Activated T-helper 1 cell treated with anti-CD3 and anti-CD28 coated beads, Interleukin-12 subunit alpha, Interleukin-12 subunit beta, Interleukin-2, Interleukin-4 antibody, amounts not matched to agents 30 ng/mL and 10 ng/mL and 1 ng/mL, durations not matched to agents 14 hours and 24 hours and 36 hours (primary cell): ENCODE measurements at regions of chrX and their contacts with region 1.

Region 1: DNA sequence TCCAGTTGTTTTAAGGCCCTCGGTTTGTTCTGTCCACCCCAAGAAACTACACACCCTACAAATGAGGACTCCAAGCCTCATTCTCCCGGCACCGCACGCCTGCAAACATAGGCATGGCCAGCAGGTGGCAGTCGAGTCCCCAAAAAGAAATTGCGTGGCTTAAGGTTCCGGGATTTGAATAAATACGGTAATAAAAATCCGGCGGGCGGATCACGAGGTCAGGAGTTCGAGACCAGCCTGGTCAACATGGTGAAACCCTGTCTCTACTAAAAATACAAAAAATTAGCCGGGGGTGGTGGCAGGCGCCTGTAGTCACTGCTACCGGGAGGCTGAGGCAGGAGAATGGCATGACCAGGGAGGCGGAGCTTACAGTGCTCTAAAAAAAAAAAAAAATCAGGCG is 21.8 kb upstream of the CSF2RA start:
- DNase-seq: peak; percentile 77
- H3K4me3 Mint-ChIP-seq: peak overlapping the region; percentile 64
- H3K27ac Mint-ChIP-seq: peak overlapping the region; percentile 78
- H3K4me1 Mint-ChIP-seq: peaks cover 42% of the 10 kb centered on the region
- H3K27me3 Mint-ChIP-seq: peaks cover 4% of the 10 kb centered on the region

Region 2: GRCh38 chrX:1205680-1206611 is 40.9 kb before region 1 on chrX:
- intact Hi-C with region 1: loop called (anchors 1 kb)
- DNase-seq: peak; percentile 32
- H3K4me3 Mint-ChIP-seq: peak overlapping the region; percentile 57
- H3K27ac Mint-ChIP-seq: no peak overlapping the region
- H3K4me1 Mint-ChIP-seq: peaks cover 31% of the 10 kb centered on the region
- H3K27me3 Mint-ChIP-seq: peaks cover 1% of the 10 kb centered on the region

Region 3: GRCh38 chrX:1212532-1212931 is 34.3 kb before region 1 on chrX and contains the start of gene CRLF2:
- intact Hi-C with region 1: loop called (anchors 1 kb)
- DNase-seq: peak; percentile 39
- H3K4me3 Mint-ChIP-seq: peak within 1 kb of the TSS; percentile 77
- H3K27ac Mint-ChIP-seq: peak within 1 kb of the TSS; percentile 79
- H3K4me1 Mint-ChIP-seq: peaks cover 37% of the 10 kb centered on the region
- H3K27me3 Mint-ChIP-seq: peaks cover 5% of the 10 kb centered on the region
- total RNA-seq, gene CRLF2: 0.88 and 1.3 TPM in 2 replicates

Region 4: DNA sequence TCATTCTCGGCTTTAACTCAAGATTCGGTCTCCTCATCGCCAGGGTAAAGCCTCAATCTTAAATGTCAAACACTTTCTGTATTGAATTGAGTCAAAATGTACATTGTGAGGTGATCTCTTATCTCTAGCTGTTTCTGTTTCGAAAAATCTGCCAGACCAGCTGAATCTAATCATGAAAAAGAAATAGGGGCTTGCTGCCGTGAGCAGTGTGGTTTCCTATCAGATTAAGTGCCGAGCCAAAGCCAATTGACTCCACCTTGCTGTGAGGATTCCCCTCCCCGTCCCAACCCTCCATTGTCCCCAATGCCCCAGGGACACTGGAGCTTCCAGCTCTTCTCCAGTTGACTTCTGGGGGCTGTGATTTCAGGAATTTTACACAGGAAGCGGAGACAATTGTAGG is 21.9 kb before region 1 on chrX:
- intact Hi-C with region 1: loop called (anchors 2 kb)
- DNase-seq: peak; percentile 9
- H3K4me3 Mint-ChIP-seq: no peak overlapping the region
- H3K27ac Mint-ChIP-seq: no peak overlapping the region
- H3K4me1 Mint-ChIP-seq: peaks cover 5% of the 10 kb centered on the region
- H3K27me3 Mint-ChIP-seq: no peaks in the 10 kb centered on the region

Region 5: DNA sequence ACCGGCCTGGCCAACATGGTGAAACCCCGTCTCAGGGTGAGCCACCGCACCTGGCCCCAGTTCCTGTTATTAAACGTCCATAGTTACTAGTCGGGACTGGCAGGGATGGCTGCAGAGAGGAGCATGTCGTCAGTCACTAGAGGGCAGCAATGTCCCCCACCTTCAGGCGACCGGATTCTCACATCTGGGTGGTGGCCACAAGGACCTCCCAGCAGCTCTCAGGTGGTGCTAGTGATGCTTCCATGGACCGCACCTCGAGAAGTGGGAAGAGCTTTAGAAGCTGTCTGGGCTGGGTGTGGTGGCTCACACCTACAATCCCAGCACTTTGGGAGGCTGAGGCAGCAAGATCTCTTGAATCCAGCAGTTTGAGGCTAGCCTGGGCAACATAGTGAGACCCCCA is 76.5 kb after region 1 on chrX:
- intact Hi-C with region 1: loop called (anchors 1 kb)
- DNase-seq: peak; percentile 45
- H3K4me3 Mint-ChIP-seq: no peak overlapping the region
- H3K27ac Mint-ChIP-seq: peak overlapping the region; percentile 55
- H3K4me1 Mint-ChIP-seq: peaks cover 12% of the 10 kb centered on the region
- H3K27me3 Mint-ChIP-seq: peaks cover 5% of the 10 kb centered on the region

Region 6: GRCh38 chrX:1580735-1581531 is 334.1 kb after region 1 on chrX:
- intact Hi-C with region 1: loop called (anchors 5 kb)
- DNase-seq: peak; percentile 66
- H3K4me3 Mint-ChIP-seq: no peak overlapping the region
- H3K27ac Mint-ChIP-seq: no peak overlapping the region
- H3K4me1 Mint-ChIP-seq: peaks cover 19% of the 10 kb centered on the region
- H3K27me3 Mint-ChIP-seq: no peaks in the 10 kb centered on the region

Region 7: DNA sequence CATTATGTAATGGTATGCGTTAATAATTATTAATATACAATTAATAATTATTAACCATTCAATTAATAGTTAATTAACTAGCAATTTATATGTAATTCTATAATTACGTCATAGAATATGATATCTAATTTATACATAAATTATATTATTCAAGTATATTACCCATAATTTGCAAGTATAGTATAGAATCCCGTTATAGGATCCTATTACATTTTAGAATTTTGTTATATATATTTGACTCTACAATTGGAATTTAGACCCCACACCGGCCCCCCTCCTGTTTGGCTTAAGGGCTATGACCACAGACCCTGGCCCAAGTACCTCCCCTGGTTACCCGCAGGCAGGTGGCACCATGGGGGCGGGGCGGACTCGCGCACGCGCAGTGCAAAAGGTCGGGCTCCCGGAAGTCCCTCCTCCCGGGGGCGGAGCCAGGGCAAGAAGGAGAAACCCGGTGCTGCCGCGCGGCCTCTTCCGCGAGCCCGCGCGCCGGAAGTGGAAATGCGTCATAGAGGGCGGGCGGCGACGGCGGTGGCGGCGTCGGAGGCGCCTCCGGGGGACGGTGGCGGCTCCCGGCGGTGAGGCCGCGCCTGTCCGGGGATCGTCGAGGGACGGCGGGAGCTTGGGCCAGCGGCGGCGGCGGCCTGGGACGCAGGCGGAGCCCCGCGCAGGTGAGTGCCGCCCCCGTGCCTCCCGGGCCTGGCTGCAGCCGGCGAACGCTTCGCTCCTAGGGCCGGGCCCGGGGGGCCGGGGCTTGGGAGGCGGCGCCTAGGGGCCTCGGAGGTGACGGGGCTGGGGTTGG is 344.5 kb after region 1 on chrX and contains the start of gene AKAP17A:
- intact Hi-C with region 1: loop called (anchors 2 kb)
- DNase-seq: peak; percentile 99
- H3K4me3 Mint-ChIP-seq: peak within 1 kb of the TSS; percentile 95
- H3K27ac Mint-ChIP-seq: peak within 1 kb of the TSS; percentile 93
- H3K4me1 Mint-ChIP-seq: peaks cover 10% of the 10 kb centered on the region
- H3K27me3 Mint-ChIP-seq: no peaks in the 10 kb centered on the region
- total RNA-seq, gene AKAP17A: 63.9 and 66.1 TPM in 2 replicates